Motor neuron (in vitro differentiated cells): ENCODE measurements at regions of chr3 and their contacts with region 1.

Region 1: GRCh38 chr3:118884748-118885206 is 149.9 kb downstream of the IGSF11 start:
- ATAC-seq: peak; percentile 64 to 94 (median 78)
- H3K4me3 ChIP-seq: no peak overlapping the region
- H3K27ac ChIP-seq: no peak overlapping the region
- H3K4me1 ChIP-seq: no peaks in the 10 kb centered on the region

Region 2: DNA sequence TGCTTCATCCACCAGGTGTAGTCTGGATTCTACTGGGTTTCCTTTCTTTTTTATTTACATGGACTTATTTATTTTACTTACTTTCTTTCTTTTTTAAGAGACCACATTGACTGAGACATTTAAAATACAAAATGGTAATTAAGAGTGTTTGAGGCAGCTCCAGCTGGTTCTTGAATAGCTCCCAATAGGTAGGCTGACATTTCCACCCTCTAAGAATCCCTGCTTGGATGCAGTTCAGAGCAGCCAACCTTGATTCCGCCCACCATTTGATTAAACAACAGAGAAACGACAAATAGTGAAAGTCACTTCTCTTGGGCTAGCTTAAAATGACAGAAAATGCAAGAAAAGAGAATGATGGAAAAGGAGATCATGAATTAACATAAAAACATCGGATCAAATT is 1904.7 kb before region 1 on chr3:
- in situ Hi-C with region 1: no loop called
- ATAC-seq: no peak
- H3K4me3 ChIP-seq: no peak overlapping the region
- H3K27ac ChIP-seq: no peak overlapping the region
- H3K4me1 ChIP-seq: peaks cover 3% of the 10 kb centered on the region in 2 donors

Region 3: GRCh38 chr3:119034256-119035013 is 149.7 kb after region 1 on chr3 and contains the start of gene IGSF11:
- in situ Hi-C with region 1: loop called in 2 of 9 experiments (anchors 10 to 25 kb)
- ATAC-seq: peak; percentile 92 to 96 (median 94)
- H3K4me3 ChIP-seq: peak within 1 kb of the TSS; percentile 44 to 81 (median 59)
- H3K27ac ChIP-seq: no peak within 1 kb of the TSS
- H3K4me1 ChIP-seq: peaks cover 0 to 2% of the 10 kb centered on the region in 2 donors
- total RNA-seq, gene IGSF11: 0.20 to 4.1 (median 1.8) TPM

Region 4: DNA sequence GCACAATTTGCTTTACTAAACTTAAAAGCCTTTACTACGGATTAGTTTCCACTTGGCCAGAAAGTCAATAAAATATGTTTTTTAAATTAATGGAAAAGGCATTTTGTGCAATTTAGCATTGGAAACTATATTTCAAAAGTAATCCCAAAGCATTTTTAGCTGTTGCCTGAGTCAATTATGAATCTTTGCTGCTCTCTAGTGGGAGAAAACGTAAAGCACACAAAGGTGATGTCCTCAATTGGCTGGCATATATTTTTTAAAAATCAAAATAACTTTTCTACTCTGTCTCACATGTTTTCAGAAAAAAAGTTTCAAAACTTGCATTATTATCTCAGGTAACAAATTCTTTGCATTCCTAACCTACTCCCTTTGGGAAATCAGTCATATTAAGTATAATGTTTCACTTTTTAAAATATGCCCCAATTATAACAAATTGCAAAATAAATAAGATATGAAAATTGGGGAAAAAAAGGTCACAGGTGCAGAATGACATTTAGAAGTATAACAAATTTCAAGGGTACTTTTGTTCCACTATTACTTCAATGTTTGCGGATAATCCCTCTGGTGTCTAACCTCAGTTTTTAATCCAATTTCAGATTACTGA is 213.9 kb after region 1 on chr3:
- in situ Hi-C with region 1: loop called in 7 of 9 experiments (anchors 10 to 25 kb)
- ATAC-seq: peak in 3 of 8 experiments; percentile 22 to 52 (median 36)
- H3K4me3 ChIP-seq: no peak overlapping the region
- H3K27ac ChIP-seq: no peak overlapping the region
- H3K4me1 ChIP-seq: no peaks in the 10 kb centered on the region

Region 5: GRCh38 chr3:119240591-119241434 is 356.0 kb after region 1 on chr3 and contains the start of gene B4GALT4:
- in situ Hi-C with region 1: loop called in 1 of 9 experiments (anchors 25 kb)
- ATAC-seq: peak; percentile 84 to 95 (median 92)
- H3K4me3 ChIP-seq: peak within 1 kb of the TSS; percentile 50 to 72 (median 61)
- H3K27ac ChIP-seq: peak within 1 kb of the TSS; percentile 81 to 92
- H3K4me1 ChIP-seq: peaks cover 0 to 8% of the 10 kb centered on the region in 2 donors
- total RNA-seq, gene B4GALT4: 9.6 to 58.2 (median 13.6) TPM